ENCODE measurements at regions of chr12 and their contacts with region 1.

Region 1: DNA sequence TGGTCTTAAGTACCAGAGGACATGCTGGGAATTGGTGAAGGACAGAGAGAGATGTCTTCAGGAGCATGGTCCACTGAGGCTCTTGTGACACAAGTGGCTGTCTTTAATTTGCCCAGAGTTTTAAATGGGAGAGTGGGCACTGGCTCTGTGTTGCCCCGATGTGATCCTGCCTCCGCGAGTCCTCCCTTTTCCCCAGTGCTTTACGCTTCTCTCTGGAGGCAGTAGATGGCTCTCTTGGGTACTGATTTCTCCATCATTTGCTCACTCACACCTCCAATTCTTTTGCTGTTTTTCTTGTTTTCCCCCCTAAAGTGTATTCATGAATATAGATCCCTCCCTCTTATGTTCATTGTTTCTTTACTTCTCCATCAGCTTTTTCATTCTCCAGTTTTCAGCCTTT is 74.3 kb downstream of the EMP1 start:
- DNase-seq: no peak

Region 2: GRCh38 chr12:13255792-13256691 is 14.8 kb before region 1 on chr12:
- CTCF ChIA-PET with region 1: interaction called, 16 read pairs
- POLR2A ChIA-PET with region 1: no interaction called
- DNase-seq: peak; percentile 94